ENCODE measurements at regions of chr3 and their contacts with region 1.

Region 1: GRCh38 chr3:157136647-157137387 is 23.1 kb downstream of the CCNL1 start:
- DNase-seq: no peak
- H3K4me3 ChIP-seq: no peak overlapping the region
- H3K27ac ChIP-seq: peak overlapping the region; percentile 13
- H3K27me3 ChIP-seq: no peaks in the 10 kb centered on the region
- CTCF ChIP-seq: no peak

Region 2: DNA sequence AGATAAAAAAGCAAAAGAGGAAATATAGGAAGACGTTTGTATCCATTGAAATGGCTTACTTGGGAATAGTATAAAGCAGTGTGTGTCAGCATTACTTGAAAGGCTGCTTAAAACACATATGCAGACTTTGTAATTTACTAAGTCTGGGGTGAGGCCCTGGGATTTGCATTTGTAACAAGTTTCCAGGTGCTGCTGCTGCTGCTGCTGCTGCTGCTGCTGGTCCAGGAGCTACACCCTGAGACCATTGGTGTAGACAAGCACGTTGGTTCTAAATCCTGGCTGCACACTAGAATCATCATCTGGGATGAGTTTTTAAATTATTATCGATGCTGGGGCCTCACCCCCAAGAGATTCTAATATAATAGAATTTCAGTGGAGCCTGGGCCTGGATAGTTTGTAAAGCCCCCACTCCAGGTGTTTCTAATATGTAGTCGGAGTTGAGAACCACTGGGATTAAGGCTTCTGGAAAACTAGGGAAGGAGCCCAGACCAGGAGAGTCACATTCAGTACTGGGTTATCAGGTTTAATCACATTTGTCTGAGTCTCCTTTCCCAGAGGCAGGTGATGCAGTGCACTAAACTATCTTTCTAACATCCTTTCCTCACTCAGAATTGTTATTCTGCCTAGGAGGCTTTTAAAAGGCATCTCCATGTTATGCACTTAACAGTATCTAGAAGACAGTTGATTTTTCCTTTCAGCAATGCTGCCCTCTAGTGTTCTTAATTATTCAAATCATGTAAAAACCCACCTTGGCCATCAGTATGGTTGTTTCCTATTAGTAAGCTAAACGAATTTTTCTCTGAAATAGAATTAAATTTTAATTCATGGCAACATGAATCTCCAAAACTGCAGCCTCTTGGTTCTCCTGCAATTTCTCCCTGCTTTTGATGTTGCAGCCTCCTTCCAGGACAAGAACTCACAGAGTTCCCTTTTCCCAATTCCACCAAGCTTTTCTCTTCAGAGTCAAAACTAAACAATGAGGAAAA is 627.3 kb before region 1 on chr3:
- CTCF ChIA-PET with region 1: interaction called, 13 read pairs
- POLR2A ChIA-PET with region 1: no interaction called
- DNase-seq: peak; percentile 34
- H3K4me3 ChIP-seq: no peak overlapping the region
- H3K27ac ChIP-seq: no peak overlapping the region
- H3K27me3 ChIP-seq: no peaks in the 10 kb centered on the region
- CTCF ChIP-seq: peak; percentile 60

Region 3: GRCh38 chr3:156674046-156674910 is 462.5 kb before region 1 on chr3 and contains the start of gene TIPARP:
- CTCF ChIA-PET with region 1: interaction called, 18 read pairs
- POLR2A ChIA-PET with region 1: no interaction called
- DNase-seq: peak; percentile 93
- H3K4me3 ChIP-seq: peak within 1 kb of the TSS; percentile 82
- H3K27ac ChIP-seq: peak within 1 kb of the TSS; percentile 77
- H3K27me3 ChIP-seq: no peaks in the 10 kb centered on the region
- CTCF ChIP-seq: peak; percentile 60
- polyA plus RNA-seq, gene TIPARP: 17.8 and 25.1 TPM in 2 replicates

Region 4: DNA sequence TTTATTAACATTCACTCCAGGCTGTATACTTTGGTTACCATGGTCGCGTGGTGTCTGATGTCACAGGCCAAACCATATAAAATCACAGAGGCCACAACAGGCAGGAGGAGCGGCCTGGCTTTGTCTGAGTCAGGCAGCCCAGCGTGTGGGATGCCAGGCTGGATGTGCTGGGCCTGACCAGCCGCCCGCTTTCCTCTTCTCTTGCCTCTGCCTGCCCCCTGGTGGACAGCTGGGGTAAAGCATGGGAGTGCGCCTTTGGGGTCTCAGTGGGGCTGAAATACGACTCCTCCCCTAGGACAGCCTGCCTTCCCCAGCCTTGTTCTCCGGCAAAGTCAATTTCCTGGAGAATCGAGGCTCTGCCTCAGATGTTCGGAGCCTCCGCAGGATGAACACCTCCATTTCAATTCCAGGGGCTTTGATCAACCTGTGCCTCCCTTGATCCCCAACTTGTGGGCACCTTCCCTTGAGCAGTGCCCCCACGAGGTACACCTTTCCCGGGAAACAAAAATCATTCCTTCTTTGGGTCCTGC is 55.1 kb before region 1 on chr3:
- CTCF ChIA-PET with region 1: interaction called, 86 read pairs
- POLR2A ChIA-PET with region 1: no interaction called
- DNase-seq: peak; percentile 73
- H3K4me3 ChIP-seq: no peak overlapping the region
- H3K27ac ChIP-seq: no peak overlapping the region
- H3K27me3 ChIP-seq: no peaks in the 10 kb centered on the region
- CTCF ChIP-seq: peak; percentile 95

Region 5: GRCh38 chr3:157113832-157114505 is 22.8 kb before region 1 on chr3:
- CTCF ChIA-PET with region 1: interaction called, 19 read pairs
- POLR2A ChIA-PET with region 1: no interaction called
- DNase-seq: no peak
- H3K4me3 ChIP-seq: no peak overlapping the region
- H3K27ac ChIP-seq: no peak overlapping the region
- H3K27me3 ChIP-seq: no peaks in the 10 kb centered on the region
- CTCF ChIP-seq: no peak

Measured in AG04450 (cell line).